ENCODE measurements at regions of chr1 and their contacts with region 1.

Region 1: DNA sequence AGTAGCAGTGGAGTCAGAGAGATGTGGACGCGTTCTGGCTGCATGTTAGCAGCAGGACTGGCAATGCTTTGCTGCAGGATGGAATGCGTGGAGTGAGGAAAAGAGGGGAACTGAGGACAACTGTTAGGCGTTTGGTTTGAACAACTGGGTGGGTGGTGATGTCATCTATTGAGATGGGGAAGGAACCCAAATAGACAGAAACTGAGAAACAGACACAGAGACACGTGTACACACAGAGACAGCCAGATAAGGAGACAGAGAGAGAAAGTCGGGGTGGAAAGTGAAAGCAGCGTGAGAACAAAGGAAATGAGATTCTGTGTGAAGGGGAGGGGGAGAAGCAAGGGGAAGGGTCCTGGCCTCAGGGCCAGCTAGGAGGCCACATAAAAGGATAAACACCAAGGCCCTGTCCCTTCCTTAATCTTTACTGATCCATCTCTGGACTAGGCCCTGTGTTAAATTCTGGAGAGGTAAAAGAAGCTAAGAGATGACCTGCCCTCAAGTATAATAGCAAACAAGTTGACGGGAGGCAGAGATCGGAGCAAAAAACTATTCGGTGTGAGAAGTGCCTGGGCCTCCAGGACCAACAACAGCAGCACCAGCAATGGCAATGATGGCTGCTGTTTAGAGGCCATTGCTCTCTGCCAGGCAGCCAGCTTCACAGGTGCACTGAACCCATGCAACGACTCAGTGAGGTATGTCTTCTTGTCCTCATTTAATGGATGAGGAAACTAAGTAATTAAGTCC is 31.6 kb downstream of the VWA5B1 start:
- DNase-seq: peak in 4 of 5 donors; percentile 7 to 39 (median 26)
- H3K4me3 ChIP-seq: peak overlapping the region; percentile 40 to 69
- H3K4me3 Mint-ChIP-seq: peak overlapping the region; percentile 74 to 94 (median 86)
- H3K27ac ChIP-seq: peak overlapping the region; percentile 57
- H3K27ac Mint-ChIP-seq: peak overlapping the region; percentile 70 to 96 (median 92)
- H3K4me1 ChIP-seq: peaks cover 34% of the 10 kb centered on the region
- H3K4me1 Mint-ChIP-seq: peaks cover 23 to 36% (median 27%) of the 10 kb centered on the region in 4 donors
- H3K27me3 ChIP-seq: no peaks in the 10 kb centered on the region
- H3K27me3 Mint-ChIP-seq: peaks cover 0 to under 1% of the 10 kb centered on the region in 2 donors

Region 2: DNA sequence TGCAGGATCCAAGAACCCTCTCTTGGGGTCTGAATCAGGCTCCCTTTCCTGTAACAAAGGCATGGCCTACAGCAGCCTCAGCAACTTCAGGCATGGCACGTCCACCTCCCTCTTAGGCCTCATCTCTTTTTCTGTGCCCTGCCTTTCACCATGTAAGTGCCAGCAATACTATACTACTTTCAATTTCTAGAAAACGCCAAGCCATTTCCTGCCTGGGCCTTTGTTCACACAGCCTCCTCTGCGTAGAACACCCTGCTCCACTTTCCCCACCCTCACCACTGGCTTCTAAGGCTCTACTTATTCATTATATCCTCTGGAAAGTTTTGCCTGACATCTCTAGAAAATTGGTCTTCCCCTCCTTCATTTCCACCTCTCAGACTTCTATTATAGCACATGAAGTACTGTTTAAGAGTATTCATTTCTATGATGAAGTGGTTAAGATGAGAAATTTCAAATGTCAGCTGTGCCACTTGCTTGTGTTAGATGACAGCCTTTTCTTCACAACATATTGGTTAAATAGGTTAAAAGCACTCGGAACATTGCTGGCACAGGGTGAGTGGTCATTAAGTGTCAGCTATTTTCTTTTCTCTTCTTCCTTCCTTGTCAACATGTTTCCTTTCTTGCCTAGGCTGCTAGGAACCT is 73.2 kb before region 1 on chr1:
- CTCF ChIA-PET with region 1: no interaction called
- POLR2A ChIA-PET with region 1: no interaction called
- intact Hi-C with region 1: loop called (anchors 5 kb)
- DNase-seq: peak in 4 of 5 donors; percentile 21 to 43 (median 36)
- H3K4me3 ChIP-seq: peak overlapping the region in 1 of 2 donors; percentile 16
- H3K4me3 Mint-ChIP-seq: peak overlapping the region; percentile 3 to 88 (median 76)
- H3K27ac ChIP-seq: no peak overlapping the region
- H3K27ac Mint-ChIP-seq: peak overlapping the region; percentile 8 to 97 (median 92)
- H3K4me1 ChIP-seq: peaks cover 22% of the 10 kb centered on the region
- H3K4me1 Mint-ChIP-seq: peaks cover 6 to 25% (median 11%) of the 10 kb centered on the region in 4 donors
- H3K27me3 ChIP-seq: no peaks in the 10 kb centered on the region
- H3K27me3 Mint-ChIP-seq: no peaks in the 10 kb centered on the region

Region 3: GRCh38 chr1:20339811-20340457 is 17.7 kb after region 1 on chr1:
- CTCF ChIA-PET with region 1: no interaction called
- POLR2A ChIA-PET with region 1: no interaction called
- intact Hi-C with region 1: no loop called
- DNase-seq: no peak
- H3K4me3 ChIP-seq: no peak overlapping the region
- H3K4me3 Mint-ChIP-seq: no peak overlapping the region
- H3K27ac ChIP-seq: no peak overlapping the region
- H3K27ac Mint-ChIP-seq: no peak overlapping the region
- H3K4me1 ChIP-seq: no peaks in the 10 kb centered on the region
- H3K4me1 Mint-ChIP-seq: peaks cover 0 to 5% (median 4%) of the 10 kb centered on the region in 4 donors
- H3K27me3 ChIP-seq: no peaks in the 10 kb centered on the region
- H3K27me3 Mint-ChIP-seq: peaks cover 7 to 19% of the 10 kb centered on the region in 2 donors

Measured in CD4-positive, alpha-beta memory T cell (primary cell).